ENCODE measurements at regions of chr2 and their contacts with region 1.

Region 1: GRCh38 chr2:84925724-84926376 is 20.4 kb downstream of the TMSB10 start:
- DNase-seq: peak; percentile 97
- H3K4me3 Mint-ChIP-seq: peak overlapping the region; percentile 91
- H3K27ac Mint-ChIP-seq: peak overlapping the region; percentile 92
- H3K4me1 Mint-ChIP-seq: peaks cover 49% of the 10 kb centered on the region
- H3K27me3 Mint-ChIP-seq: no peaks in the 10 kb centered on the region

Region 2: DNA sequence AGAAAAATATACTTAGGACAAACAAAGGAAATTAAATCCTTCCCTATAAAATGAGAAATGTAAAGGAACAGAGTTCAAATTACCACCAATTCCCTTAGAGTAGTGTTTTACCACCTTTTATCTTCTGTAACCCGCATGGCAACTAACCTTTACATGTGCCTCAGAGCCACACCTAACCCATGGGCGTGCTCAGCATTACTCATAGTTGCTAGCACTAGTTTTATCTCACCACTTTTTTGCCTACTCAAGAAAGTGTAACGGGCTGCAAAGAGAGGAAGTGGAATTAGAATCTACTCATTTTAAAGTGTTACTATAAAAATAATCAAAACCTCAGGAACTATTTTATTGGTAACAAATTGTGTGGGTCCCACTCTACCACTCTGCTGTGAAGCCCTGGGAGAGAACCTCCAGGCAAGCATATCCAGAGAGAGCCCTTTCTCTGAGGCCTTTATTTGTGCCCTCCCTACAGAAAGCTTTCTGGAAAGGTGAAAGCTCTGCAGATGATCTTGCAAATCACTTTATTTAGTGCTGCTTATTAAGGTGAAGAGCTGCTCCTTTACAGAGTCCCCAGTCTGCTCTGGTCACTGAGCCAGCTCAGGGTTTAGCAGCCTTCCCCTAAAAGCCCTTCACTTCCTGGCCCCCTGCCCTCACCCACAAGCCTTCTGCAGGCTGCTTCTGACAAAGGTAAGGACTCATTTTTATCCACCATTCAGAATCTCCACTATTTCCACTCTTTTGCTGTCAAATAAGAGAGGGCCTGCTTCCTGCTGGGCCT is 143.7 kb before region 1 on chr2:
- intact Hi-C with region 1: loop called (anchors 2 kb)
- DNase-seq: peak; percentile 57
- H3K4me3 Mint-ChIP-seq: no peak overlapping the region
- H3K27ac Mint-ChIP-seq: peak overlapping the region; percentile 87
- H3K4me1 Mint-ChIP-seq: peaks cover 66% of the 10 kb centered on the region
- H3K27me3 Mint-ChIP-seq: no peaks in the 10 kb centered on the region

Region 3: DNA sequence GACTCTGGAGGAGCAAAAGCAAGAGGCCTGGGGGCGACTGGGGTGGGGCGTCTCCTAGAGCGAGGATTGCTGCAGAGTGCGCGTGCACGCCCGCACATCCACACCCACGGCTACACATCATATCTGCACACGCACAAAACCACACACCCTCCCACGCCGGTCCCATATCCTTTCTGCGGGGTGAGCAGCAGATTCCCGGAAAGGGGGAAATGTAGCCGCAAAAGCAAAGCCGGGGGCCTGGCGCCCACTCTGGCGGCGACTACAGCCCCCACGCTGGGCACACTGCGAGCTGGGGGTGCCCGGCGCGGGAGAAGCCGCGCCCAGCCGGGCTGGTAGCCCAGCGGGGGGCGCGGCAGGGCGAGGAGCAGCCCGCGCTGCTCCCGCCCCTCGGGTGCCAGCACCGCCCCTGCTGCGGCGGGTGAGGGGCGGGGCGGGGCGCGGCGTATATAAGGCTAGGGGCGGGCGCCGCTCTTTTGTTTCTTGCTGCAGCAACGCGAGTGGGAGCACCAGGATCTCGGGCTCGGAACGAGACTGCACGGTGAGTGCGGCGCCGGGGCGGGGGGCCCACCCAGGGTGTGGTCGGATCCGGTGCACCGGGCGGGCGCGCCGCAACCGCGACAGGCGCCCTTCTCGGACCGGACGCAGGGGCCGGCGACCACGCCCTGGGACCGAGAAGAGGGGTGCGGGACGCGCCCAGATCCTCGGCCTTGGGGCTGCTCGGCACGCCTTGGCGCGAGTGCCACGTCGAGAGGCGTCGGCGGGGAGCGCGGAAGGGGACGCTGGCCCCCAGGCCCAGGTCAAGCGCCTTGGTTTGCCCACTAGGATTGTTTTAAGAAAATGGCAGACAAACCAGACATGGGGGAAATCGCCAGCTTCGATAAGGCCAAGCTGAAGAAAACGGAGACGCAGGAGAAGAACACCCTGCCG is 20.4 kb before region 1 on chr2 and contains the start of gene TMSB10:
- intact Hi-C with region 1: loop called (anchors 1 kb)
- DNase-seq: peak; percentile 90
- H3K4me3 Mint-ChIP-seq: peak within 1 kb of the TSS; percentile 83
- H3K27ac Mint-ChIP-seq: peak within 1 kb of the TSS; percentile 76
- H3K4me1 Mint-ChIP-seq: peaks cover 46% of the 10 kb centered on the region
- H3K27me3 Mint-ChIP-seq: no peaks in the 10 kb centered on the region
- total RNA-seq, gene TMSB10: 2,676 and 2,847 TPM in 2 replicates

Region 4: GRCh38 chr2:84946204-84947009 is 20.6 kb after region 1 on chr2:
- intact Hi-C with region 1: loop called (anchors 1 kb)
- DNase-seq: peak; percentile 50
- H3K4me3 Mint-ChIP-seq: peak overlapping the region; percentile 62
- H3K27ac Mint-ChIP-seq: peak overlapping the region; percentile 92
- H3K4me1 Mint-ChIP-seq: peaks cover 38% of the 10 kb centered on the region
- H3K27me3 Mint-ChIP-seq: no peaks in the 10 kb centered on the region

Region 5: DNA sequence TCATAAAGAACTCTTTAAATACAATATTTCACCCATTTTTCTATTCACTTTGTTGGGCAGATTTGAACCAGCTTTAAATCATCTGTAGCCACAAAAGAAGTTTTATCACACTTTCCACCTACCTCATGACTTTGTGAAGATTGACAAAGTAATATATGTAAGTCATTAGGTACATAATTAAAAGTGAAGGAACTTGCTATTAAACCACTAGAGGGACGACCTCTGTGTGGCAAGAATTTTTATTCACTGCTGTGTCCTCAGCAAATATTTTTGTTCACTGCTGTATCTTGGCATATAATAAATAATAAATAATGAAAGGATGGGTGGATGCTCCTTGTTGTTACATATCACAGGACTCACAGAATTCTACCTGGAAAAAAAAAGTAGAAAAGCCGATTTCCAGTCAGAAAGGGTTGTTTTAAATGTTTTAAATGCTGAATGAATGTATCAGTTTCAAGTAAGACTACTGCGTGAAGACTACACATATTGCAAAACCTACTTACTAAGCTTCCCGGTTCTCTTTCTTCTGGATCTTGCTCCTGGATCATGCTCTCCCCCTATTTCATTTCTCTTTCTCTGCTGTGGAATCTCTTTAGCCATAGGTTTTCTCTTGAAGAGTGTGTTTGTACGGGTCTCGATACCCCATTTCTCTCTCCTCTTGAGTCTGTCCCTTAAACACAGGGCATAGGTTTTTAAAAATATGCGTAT is 90.0 kb after region 1 on chr2:
- intact Hi-C with region 1: loop called (anchors 1 kb)
- DNase-seq: no peak
- H3K4me3 Mint-ChIP-seq: no peak overlapping the region
- H3K27ac Mint-ChIP-seq: peak overlapping the region; percentile 61
- H3K4me1 Mint-ChIP-seq: peaks cover 52% of the 10 kb centered on the region
- H3K27me3 Mint-ChIP-seq: no peaks in the 10 kb centered on the region